ENCODE measurements at regions of chr16 and their contacts with region 1.

Region 1: GRCh38 chr16:22098405-22099255 is 6.3 kb downstream of the VWA3A start:
- DNase-seq: peak; percentile 39
- H3K4me3 Mint-ChIP-seq: peak overlapping the region; percentile 30
- H3K27ac Mint-ChIP-seq: no peak overlapping the region
- H3K4me1 Mint-ChIP-seq: no peaks in the 10 kb centered on the region
- H3K27me3 Mint-ChIP-seq: peaks cover 37% of the 10 kb centered on the region
- CTCF ChIP-seq: peak; percentile 61

Region 2: GRCh38 chr16:21673469-21673868 is 425.2 kb before region 1 on chr16:
- CTCF ChIA-PET with region 1: no interaction called
- intact Hi-C with region 1: no loop called
- DNase-seq: no peak
- H3K4me3 Mint-ChIP-seq: no peak overlapping the region
- H3K27ac Mint-ChIP-seq: no peak overlapping the region
- H3K4me1 Mint-ChIP-seq: no peaks in the 10 kb centered on the region
- H3K27me3 Mint-ChIP-seq: peaks cover 14% of the 10 kb centered on the region
- CTCF ChIP-seq: no peak

Region 3: GRCh38 chr16:22001591-22001990 is 97.0 kb before region 1 on chr16:
- CTCF ChIA-PET with region 1: interaction called, 10 read pairs
- intact Hi-C with region 1: loop called (anchors 2 kb)
- DNase-seq: no peak
- H3K4me3 Mint-ChIP-seq: no peak overlapping the region
- H3K27ac Mint-ChIP-seq: no peak overlapping the region
- H3K4me1 Mint-ChIP-seq: peaks cover 18% of the 10 kb centered on the region
- H3K27me3 Mint-ChIP-seq: no peaks in the 10 kb centered on the region
- CTCF ChIP-seq: no peak

Region 4: DNA sequence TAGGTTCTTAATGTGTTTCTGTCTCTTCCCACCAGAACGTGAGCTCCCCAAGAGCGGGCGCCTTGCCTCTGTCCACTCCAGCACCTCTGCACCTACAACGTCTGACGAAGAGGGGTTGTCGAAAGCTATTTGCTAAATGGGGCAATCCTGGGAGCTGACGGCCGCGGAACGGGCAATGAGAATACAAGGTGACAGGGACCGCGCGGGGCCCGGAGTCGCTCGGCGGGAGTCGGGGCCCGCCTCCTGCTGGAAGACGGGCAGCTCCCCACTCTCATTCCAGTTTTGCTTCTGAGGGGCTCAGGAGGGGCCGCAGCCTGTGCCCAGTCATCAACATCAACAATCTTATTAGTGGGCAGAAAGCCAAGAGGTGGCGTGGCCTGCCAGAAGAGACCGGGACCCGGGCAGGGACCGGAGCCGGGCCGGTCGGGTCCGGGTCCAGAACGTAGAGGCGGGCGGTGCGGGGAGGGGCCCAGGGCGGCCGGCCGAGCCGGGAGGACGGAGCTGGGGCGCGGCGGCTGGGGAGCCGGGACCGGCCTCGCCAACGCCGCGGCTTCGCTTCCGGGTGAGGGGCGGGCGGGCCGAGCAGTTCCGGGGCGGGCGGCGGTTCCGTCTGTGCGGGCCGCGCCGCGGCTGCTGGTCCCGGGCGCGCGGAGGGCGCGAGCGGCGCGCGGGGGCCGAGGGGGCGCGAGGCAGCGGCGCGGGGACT is 91.0 kb before region 1 on chr16 and contains the start of gene MOSMO:
- CTCF ChIA-PET with region 1: interaction called, 13 read pairs
- intact Hi-C with region 1: no loop called
- DNase-seq: peak; percentile 78
- H3K4me3 Mint-ChIP-seq: peak within 1 kb of the TSS; percentile 80
- H3K27ac Mint-ChIP-seq: peak within 1 kb of the TSS; percentile 66
- H3K4me1 Mint-ChIP-seq: peaks cover 37% of the 10 kb centered on the region
- H3K27me3 Mint-ChIP-seq: no peaks in the 10 kb centered on the region
- CTCF ChIP-seq: no peak
- total RNA-seq, gene MOSMO: 24.0 and 30.1 TPM in 2 replicates

Region 5: GRCh38 chr16:22055878-22056277 is 42.8 kb before region 1 on chr16:
- CTCF ChIA-PET with region 1: no interaction called
- intact Hi-C with region 1: no loop called
- DNase-seq: no peak
- H3K4me3 Mint-ChIP-seq: no peak overlapping the region
- H3K27ac Mint-ChIP-seq: no peak overlapping the region
- H3K4me1 Mint-ChIP-seq: no peaks in the 10 kb centered on the region
- H3K27me3 Mint-ChIP-seq: no peaks in the 10 kb centered on the region
- CTCF ChIP-seq: no peak

Region 6: GRCh38 chr16:22109258-22109898 is 10.7 kb after region 1 on chr16:
- CTCF ChIA-PET with region 1: interaction called, 14 read pairs
- intact Hi-C with region 1: no loop called
- DNase-seq: no peak
- H3K4me3 Mint-ChIP-seq: no peak overlapping the region
- H3K27ac Mint-ChIP-seq: no peak overlapping the region
- H3K4me1 Mint-ChIP-seq: no peaks in the 10 kb centered on the region
- H3K27me3 Mint-ChIP-seq: peaks cover 67% of the 10 kb centered on the region
- CTCF ChIP-seq: no peak

Region 7: GRCh38 chr16:22188595-22189442 is 90.2 kb after region 1 on chr16:
- CTCF ChIA-PET with region 1: interaction called, 34 read pairs
- intact Hi-C with region 1: loop called (anchors 1 kb)
- DNase-seq: peak; percentile 86
- H3K4me3 Mint-ChIP-seq: no peak overlapping the region
- H3K27ac Mint-ChIP-seq: no peak overlapping the region
- H3K4me1 Mint-ChIP-seq: peaks cover 39% of the 10 kb centered on the region
- H3K27me3 Mint-ChIP-seq: no peaks in the 10 kb centered on the region
- CTCF ChIP-seq: peak; percentile 78

Region 8: DNA sequence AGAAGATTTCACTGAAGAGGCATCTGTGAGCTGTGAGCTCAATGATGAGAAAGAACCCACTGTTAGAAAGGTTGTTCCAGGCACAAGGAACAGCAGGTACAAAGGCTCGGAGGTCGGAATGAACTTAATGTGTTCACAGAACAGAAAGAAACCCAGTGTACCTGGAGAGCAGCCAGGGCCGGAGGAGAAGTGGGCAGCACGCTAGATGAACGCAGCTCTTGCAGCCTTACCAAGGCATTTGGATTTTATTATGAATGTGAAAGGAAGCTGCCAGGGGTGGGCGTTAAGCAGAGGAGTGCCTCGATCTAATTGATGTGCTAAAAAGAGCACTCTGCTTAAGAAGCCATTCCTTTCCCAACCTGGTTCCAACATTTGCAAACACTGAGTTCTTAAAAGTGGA is 126.4 kb after region 1 on chr16:
- CTCF ChIA-PET with region 1: interaction called, 10 read pairs
- intact Hi-C with region 1: no loop called
- DNase-seq: no peak
- H3K4me3 Mint-ChIP-seq: no peak overlapping the region
- H3K27ac Mint-ChIP-seq: no peak overlapping the region
- H3K4me1 Mint-ChIP-seq: no peaks in the 10 kb centered on the region
- H3K27me3 Mint-ChIP-seq: no peaks in the 10 kb centered on the region
- CTCF ChIP-seq: no peak

Region 9: GRCh38 chr16:22272870-22273595 is 174.4 kb after region 1 on chr16:
- CTCF ChIA-PET with region 1: no interaction called
- intact Hi-C with region 1: no loop called
- DNase-seq: no peak
- H3K4me3 Mint-ChIP-seq: no peak overlapping the region
- H3K27ac Mint-ChIP-seq: no peak overlapping the region
- H3K4me1 Mint-ChIP-seq: no peaks in the 10 kb centered on the region
- H3K27me3 Mint-ChIP-seq: no peaks in the 10 kb centered on the region
- CTCF ChIP-seq: no peak